Activated CD4-positive, alpha-beta memory T cell treated with anti-CD3 and anti-CD28 coated beads for 36 hours (primary cell): ENCODE measurements at regions of chr1 and their contacts with region 1.

Region 1: GRCh38 chr1:171422511-171422910 is 62.8 kb upstream of the PRRC2C start:
- DNase-seq: no peak
- H3K4me3 Mint-ChIP-seq: no peak overlapping the region
- H3K27ac Mint-ChIP-seq: no peak overlapping the region
- H3K4me1 Mint-ChIP-seq: peaks cover 31% of the 10 kb centered on the region
- H3K27me3 Mint-ChIP-seq: no peaks in the 10 kb centered on the region

Region 2: DNA sequence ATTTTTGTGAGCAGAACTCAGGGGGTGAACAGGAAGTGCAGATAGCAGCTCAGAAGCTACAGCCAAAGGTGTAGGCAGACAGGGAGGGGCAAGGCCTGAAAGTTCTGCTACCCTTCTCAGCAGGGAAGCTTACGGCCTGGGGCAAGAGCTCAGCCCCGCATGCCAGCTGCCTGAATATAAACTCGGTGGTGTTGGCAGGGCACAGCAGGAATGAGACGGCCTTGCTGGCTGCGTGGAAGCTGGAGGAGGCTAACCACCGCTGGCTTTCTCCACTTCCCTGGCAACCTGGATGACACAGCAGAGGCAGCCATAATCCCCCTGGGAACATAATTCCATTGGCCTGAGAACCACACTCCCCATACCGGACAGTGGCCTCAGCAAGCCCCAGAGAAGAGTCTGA is 19.1 kb before region 1 on chr1:
- CTCF ChIA-PET with region 1: no interaction called
- POLR2A ChIA-PET with region 1: no interaction called
- intact Hi-C with region 1: no loop called
- DNase-seq: no peak
- H3K4me3 Mint-ChIP-seq: no peak overlapping the region
- H3K27ac Mint-ChIP-seq: no peak overlapping the region
- H3K4me1 Mint-ChIP-seq: no peaks in the 10 kb centered on the region
- H3K27me3 Mint-ChIP-seq: no peaks in the 10 kb centered on the region

Region 3: GRCh38 chr1:171434717-171435346 is 12.3 kb after region 1 on chr1:
- CTCF ChIA-PET with region 1: no interaction called
- POLR2A ChIA-PET with region 1: no interaction called
- intact Hi-C with region 1: loop called (anchors 2 kb)
- DNase-seq: peak; percentile 19
- H3K4me3 Mint-ChIP-seq: peak overlapping the region; percentile 24
- H3K27ac Mint-ChIP-seq: peak overlapping the region; percentile 72
- H3K4me1 Mint-ChIP-seq: peaks cover 14% of the 10 kb centered on the region
- H3K27me3 Mint-ChIP-seq: no peaks in the 10 kb centered on the region